Dorsolateral prefrontal cortex (tissue), 120 donors: ENCODE measurements at regions of chr16 and their contacts with region 1.

Region 1: DNA sequence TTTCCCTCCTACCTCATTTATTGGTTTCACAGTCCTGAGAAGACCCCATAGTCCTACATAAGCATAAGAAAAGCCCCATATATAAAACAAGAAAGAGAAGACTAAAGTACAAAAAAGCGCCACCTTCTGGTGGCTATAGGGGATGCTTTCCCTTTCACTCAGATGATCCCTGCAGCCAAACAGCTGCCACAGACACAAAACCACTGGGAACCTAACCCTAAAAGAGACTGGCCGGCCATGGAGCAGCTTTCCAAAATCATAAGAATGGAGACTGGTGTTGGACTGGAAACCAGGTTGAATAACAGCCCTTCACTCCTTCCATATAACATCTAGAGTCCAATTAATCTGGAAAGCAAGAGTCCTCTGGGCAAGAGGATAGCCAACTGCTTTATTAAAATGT is 11.4 kb downstream of the DYNC1LI2 start:
- DNase-seq: peak in 1 of 10 donors; percentile 47
- H3K4me3 ChIP-seq: peak overlapping the region in 16 of 59 donors; percentile 2 to 40 (median 21)
- H3K27ac ChIP-seq: peak overlapping the region; percentile 76 to 99 (median 96)
- H3K27me3 ChIP-seq: no peaks in the 10 kb centered on the region
- CTCF ChIP-seq: peak in 55 of 56 donors; percentile 4 to 72 (median 57)

Region 2: DNA sequence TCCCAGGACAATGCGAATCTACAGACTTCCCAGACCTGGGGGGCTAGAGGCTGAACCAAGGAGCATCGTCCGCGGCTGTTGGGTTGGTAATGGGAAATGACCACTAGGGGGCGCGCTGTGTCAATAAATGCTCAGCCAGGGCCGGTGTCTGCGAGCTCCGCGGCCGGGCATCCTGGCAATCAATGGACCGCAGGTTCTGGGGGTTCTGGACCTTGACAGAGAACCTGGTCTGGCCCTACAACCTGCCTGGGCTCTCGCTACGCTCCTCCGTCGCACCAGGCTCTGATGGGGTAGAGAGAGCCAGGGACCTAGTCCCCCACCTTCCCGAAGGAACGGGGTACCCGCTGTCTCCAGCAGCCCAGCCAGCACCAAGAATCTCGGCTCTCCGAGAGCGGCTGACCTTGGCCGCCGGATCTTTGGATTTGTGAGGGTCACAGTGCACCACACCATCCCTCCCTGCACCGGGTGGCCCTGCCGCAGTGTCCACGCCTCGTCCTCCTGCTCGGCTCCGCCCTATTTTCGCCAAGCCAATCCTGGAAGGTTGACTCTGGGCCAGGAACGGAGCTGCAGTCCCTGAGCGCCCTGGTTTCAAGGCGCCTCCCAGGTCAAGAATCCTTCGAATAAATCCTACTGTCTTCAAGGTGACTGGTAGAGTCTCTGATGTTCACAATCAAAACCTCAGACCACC is 333.3 kb before region 1 on chr16:
- intact Hi-C with region 1: loop called in 1 of 2 experiments (anchors 10 kb)
- DNase-seq: peak; percentile 78 to 89 (median 89)
- H3K4me3 ChIP-seq: peak overlapping the region; percentile 51 to 98 (median 72)
- H3K27ac ChIP-seq: peak overlapping the region in 44 of 59 donors; percentile 3 to 87 (median 68)
- H3K27me3 ChIP-seq: peaks cover 0 to 10% (median 0%) of the 10 kb centered on the region in 45 donors
- CTCF ChIP-seq: peak; percentile 79 to 99 (median 92)

Region 3: GRCh38 chr16:66696669-66697630 is 43.1 kb before region 1 on chr16 and contains the start of gene CMTM4:
- intact Hi-C with region 1: loop called in 1 of 2 experiments (anchors 5 kb)
- DNase-seq: peak; percentile 59 to 92 (median 80)
- H3K4me3 ChIP-seq: peak within 1 kb of the TSS; percentile 64 to 95 (median 84)
- H3K27ac ChIP-seq: peak within 1 kb of the TSS; percentile 25 to 95 (median 84)
- H3K27me3 ChIP-seq: no peaks in the 10 kb centered on the region
- CTCF ChIP-seq: peak in 29 of 56 donors; percentile 4 to 57 (median 32)
- total RNA-seq, gene CMTM4: 82.8 to 193 (median 119) TPM

Region 4: GRCh38 chr16:66988197-66988788 is 248.3 kb after region 1 on chr16 and contains the start of gene CES4A:
- intact Hi-C with region 1: no loop called
- DNase-seq: no peak
- H3K4me3 ChIP-seq: no peak within 1 kb of the TSS
- H3K27ac ChIP-seq: peak within 1 kb of the TSS in 18 of 59 donors; percentile 8 to 60 (median 33)
- H3K27me3 ChIP-seq: no peaks in the 10 kb centered on the region
- CTCF ChIP-seq: no peak
- total RNA-seq, gene CES4A: 46.0 to 216 (median 110) TPM

Region 5: DNA sequence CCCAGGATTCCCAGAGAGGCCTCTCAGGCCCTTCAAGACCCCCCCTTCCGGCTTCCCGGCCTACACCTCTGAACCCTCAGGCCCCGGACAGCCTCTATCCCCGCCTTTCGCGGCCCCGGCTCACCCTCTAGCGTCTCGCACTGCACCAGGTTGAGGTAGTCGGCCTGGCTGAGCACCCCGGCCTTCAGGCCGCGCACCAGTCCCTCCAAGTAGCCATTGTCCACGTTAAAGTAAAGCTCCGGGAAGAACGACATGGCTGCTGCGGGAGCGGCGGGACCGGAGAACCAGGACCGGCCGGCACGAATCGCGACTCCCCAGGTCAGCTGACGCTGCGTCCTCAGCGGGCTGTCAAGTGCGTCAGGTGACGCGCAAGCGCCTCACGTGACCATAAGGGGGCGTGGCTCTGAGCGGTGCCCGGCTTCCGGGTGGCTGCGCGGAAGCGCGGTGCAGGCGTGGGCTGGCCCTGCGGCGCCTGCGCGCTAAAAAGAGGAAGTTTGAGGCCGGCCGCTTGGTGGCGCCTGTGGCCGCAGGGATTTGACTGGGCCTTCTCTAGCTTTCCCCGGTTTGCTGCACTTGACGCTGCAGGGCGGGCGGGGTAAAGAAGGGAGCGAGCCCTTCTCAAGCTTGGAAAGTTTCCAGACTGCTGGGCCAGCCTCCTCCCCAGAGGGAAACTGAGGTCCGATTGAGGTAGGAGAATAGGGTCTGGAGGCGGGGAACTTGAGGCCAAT is 741.0 kb after region 1 on chr16 and contains the start of gene ATP6V0D1:
- intact Hi-C with region 1: no loop called
- DNase-seq: peak; percentile 95 to 99 (median 98)
- H3K4me3 ChIP-seq: peak within 1 kb of the TSS; percentile 60 to 100 (median 96)
- H3K27ac ChIP-seq: peak within 1 kb of the TSS; percentile 21 to 99 (median 92)
- H3K27me3 ChIP-seq: no peaks in the 10 kb centered on the region
- CTCF ChIP-seq: peak; percentile 83 to 100 (median 95)
- total RNA-seq, gene ATP6V0D1: 97.6 to 219 (median 177) TPM